Vagina (tissue), 2 donors: ENCODE measurements at regions of chr16 and their contacts with region 1.

Region 1: DNA sequence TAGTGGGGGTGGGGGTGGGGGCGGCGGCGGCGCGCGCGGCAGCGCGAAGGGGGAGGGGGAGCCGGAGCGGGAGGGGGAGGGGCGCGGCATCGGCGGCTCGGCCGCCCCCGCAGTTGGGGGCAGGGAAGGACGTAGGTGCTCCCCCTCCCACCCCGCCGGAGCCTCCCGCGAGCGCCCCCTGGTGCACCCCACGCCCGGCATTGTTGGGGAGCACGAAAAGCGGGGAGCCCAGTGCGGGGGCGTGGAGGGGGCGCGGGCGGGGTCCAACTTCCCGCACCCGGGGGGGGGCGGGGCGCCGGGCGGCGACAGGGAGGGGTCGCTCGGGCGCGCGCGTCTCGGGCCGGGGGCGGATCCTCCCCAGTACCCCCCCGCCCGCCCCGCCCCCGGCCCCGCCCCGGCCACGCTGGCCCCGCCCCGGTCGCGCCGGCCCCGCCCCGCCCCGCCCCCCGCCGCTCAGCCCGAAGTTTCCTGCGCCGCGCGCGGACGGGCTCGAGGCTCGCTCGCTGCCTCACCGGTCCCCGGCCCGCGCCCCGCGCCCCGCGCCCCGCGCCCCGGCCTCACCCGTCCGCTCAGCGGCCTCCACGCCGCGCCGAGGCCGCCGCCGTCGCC is at the start of gene CACNA1H:
- DNase-seq: no peak
- H3K4me3 ChIP-seq: peak within 1 kb of the TSS; percentile 38 to 55
- H3K27ac ChIP-seq: peak within 1 kb of the TSS; percentile 54
- H3K4me1 ChIP-seq: peaks cover 25% of the 10 kb centered on the region
- H3K27me3 ChIP-seq: peaks cover 11% of the 10 kb centered on the region
- CTCF ChIP-seq: no peak
- POLR2A ChIP-seq: no peak
- total RNA-seq, gene CACNA1H: 10.8 TPM

Region 2: DNA sequence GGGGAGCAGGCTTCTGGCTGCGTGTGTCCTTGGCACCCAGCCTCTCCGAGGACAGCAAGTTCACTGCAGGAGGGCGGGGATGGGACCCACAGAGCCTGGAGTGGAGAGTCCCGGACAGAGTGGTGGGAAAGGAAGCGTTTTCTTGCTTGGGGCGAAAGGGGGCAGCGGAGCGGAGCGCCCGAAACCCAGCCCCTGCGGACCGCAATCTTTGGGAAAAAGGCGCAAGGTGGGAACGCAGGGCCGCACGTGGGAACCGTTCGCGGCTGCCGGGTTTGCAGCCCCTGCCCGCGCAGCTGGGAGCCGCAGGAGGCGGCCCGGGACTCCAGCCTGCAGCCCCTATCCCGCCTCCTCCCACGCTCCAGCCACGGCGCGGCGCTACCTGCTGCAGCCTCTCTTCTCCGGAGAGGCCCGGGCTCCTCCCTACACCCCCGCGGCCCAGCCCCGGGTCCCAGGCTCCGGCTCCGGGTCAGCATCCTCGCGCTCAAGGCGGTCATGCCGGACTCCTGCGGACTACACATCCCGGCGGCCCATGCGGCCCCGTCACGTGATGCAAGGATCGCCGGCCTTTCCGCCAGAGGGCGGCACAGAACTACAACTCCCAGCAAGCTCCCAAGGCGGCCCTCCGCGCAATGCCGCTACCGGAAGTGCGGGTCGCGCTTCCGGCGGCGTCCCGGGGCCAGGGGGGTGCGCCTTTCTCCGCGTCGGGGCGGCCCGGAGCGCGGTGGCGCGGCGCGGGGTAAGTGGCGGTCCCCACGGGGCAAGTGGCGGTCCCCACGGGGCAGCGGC is 894.8 kb after region 1 on chr16 and contains the starts of genes NTHL1 and TSC2:
- intact Hi-C with region 1: loop called (anchors 10 kb)
- DNase-seq: peak in 1 of 2 donors; percentile 97
- H3K4me3 ChIP-seq: peak within 1 kb of the TSS; percentile 88 to 91
- H3K27ac ChIP-seq: peak within 1 kb of the TSS; percentile 80
- H3K4me1 ChIP-seq: peaks cover 50% of the 10 kb centered on the region
- H3K27me3 ChIP-seq: no peaks in the 10 kb centered on the region
- CTCF ChIP-seq: peak in 2 of 3 experiments; percentile 32 to 58
- POLR2A ChIP-seq: peak in 1 of 2 donors; percentile 11
- total RNA-seq, gene NTHL1: 28.5 TPM
- total RNA-seq, gene TSC2: 78.6 TPM